ENCODE measurements at regions of chr9 and their contacts with region 1.

Region 1: GRCh38 chr9:129933185-129934040 is 98.2 kb downstream of the USP20 start:
- DNase-seq: no peak
- ATAC-seq: no peak

Region 2: DNA sequence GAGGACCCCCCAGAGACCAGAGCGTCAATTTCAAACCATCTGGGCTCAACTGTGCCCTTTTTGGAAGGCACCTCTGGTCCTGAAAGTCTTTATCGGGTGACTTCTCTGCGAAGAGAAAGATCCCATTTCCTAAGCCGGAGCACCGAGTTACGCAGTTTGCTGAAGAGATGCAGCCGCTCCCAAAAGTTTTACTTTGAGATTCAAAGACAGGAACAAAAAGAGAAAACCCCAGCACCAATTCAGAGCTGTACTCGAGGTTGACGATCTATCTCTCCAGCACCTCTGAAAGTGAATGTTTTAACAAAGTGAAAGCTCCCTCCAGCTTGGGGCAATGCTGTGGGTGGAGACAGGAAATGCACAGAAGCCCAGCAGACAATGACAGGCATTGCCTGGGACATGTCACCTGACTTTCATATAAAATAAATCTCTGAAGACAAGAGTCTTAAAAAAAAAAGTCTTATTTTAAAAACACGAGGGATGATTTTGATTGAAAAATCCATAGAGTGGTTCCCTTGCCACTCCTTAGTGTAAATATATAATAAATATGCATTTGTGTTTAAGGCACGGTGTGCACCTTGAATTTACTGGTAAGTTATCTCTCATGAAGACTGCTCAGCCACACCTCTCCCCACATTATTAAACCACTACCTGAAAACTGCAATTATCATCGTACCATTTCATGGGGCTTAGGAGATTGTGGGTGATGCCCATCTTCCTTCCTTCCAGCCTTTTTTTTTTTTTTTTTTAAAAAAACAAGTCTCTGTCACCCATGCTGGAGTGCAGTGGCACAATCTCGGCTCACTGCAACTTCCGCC is 29.7 kb after region 1 on chr9:
- intact Hi-C with region 1: loop called (anchors 2 kb)
- DNase-seq: no peak
- ATAC-seq: peak; percentile 70

Region 3: GRCh38 chr9:130073373-130073772 is 140.0 kb after region 1 on chr9:
- intact Hi-C with region 1: no loop called
- DNase-seq: no peak
- ATAC-seq: no peak

Measured in Right ventricle myocardium inferior (tissue), 1 donor.